ENCODE measurements at regions of chr14 and their contacts with region 1.

Region 1: GRCh38 chr14:67666750-67667449 is 7.5 kb downstream of the VTI1B start:
- DNase-seq: peak; percentile 55
- ATAC-seq: peak; percentile 85
- H3K4me3 Mint-ChIP-seq: no peak overlapping the region
- H3K27ac Mint-ChIP-seq: peak overlapping the region; percentile 28
- H3K4me1 Mint-ChIP-seq: peaks cover 33% of the 10 kb centered on the region
- H3K27me3 Mint-ChIP-seq: no peaks in the 10 kb centered on the region

Region 2: GRCh38 chr14:67583711-67584644 is 82.9 kb before region 1 on chr14:
- CTCF ChIA-PET with region 1: interaction called, 48 read pairs
- POLR2A ChIA-PET with region 1: no interaction called
- DNase-seq: peak; percentile 42
- ATAC-seq: peak; percentile 74
- H3K4me3 Mint-ChIP-seq: no peak overlapping the region
- H3K27ac Mint-ChIP-seq: no peak overlapping the region
- H3K4me1 Mint-ChIP-seq: peaks cover 6% of the 10 kb centered on the region
- H3K27me3 Mint-ChIP-seq: no peaks in the 10 kb centered on the region

Region 3: GRCh38 chr14:67599698-67600561 is 67.0 kb before region 1 on chr14 and contains the start of gene PIGH:
- CTCF ChIA-PET with region 1: interaction called, 16 read pairs
- POLR2A ChIA-PET with region 1: no interaction called
- DNase-seq: peak; percentile 95
- ATAC-seq: peak; percentile 99
- H3K4me3 Mint-ChIP-seq: peak within 1 kb of the TSS; percentile 82
- H3K27ac Mint-ChIP-seq: peak within 1 kb of the TSS; percentile 95
- H3K4me1 Mint-ChIP-seq: peaks cover 28% of the 10 kb centered on the region
- H3K27me3 Mint-ChIP-seq: no peaks in the 10 kb centered on the region
- total RNA-seq, gene PIGH: 14.8 to 17.5 TPM

Region 4: GRCh38 chr14:67610491-67610890 is 56.4 kb before region 1 on chr14:
- CTCF ChIA-PET with region 1: interaction called, 14 read pairs
- POLR2A ChIA-PET with region 1: no interaction called
- DNase-seq: no peak
- ATAC-seq: no peak
- H3K4me3 Mint-ChIP-seq: no peak overlapping the region
- H3K27ac Mint-ChIP-seq: no peak overlapping the region
- H3K4me1 Mint-ChIP-seq: no peaks in the 10 kb centered on the region
- H3K27me3 Mint-ChIP-seq: peaks cover 6% of the 10 kb centered on the region

Region 5: DNA sequence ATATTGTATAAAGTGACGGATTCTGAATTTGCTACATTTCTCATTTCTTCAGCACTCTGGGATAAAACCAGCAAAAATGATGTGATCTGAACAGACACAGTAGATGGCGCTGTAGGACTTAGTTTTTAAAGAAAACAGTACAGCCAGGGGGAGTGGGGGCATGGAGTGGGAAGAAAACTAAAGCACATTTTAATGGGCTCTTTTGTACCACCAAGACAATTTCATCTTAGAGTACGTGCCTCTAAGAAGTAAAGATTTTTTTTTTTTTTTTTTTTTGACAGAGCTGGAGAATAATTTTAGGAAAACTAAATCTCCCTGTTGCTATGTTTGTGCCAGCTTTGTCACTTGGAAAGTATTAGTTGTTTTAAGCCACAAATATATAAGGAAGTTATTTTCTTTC is 277.0 kb after region 1 on chr14:
- CTCF ChIA-PET with region 1: no interaction called
- POLR2A ChIA-PET with region 1: no interaction called
- DNase-seq: peak; percentile 68
- ATAC-seq: peak; percentile 42
- H3K4me3 Mint-ChIP-seq: no peak overlapping the region
- H3K27ac Mint-ChIP-seq: no peak overlapping the region
- H3K4me1 Mint-ChIP-seq: no peaks in the 10 kb centered on the region
- H3K27me3 Mint-ChIP-seq: peaks cover 7% of the 10 kb centered on the region